Spleen (tissue), 13 donors: ENCODE measurements at regions of chr9 and their contacts with region 1.

Region 1: GRCh38 chr9:98034593-98035546 is 21.7 kb upstream of the NANS start:
- DNase-seq: peak; percentile 94
- H3K4me3 ChIP-seq: peak overlapping the region in 1 of 8 donors; percentile 44
- H3K27ac ChIP-seq: peak overlapping the region in 5 of 8 donors; percentile 3 to 73 (median 56)
- H3K4me1 ChIP-seq: peaks cover 7 to 56% (median 41%) of the 10 kb centered on the region in 6 donors
- H3K27me3 ChIP-seq: no peaks in the 10 kb centered on the region
- CTCF ChIP-seq: peak; percentile 61 to 94 (median 86)
- POLR2A ChIP-seq: no peak

Region 2: GRCh38 chr9:97921959-97922724 is 112.7 kb before region 1 on chr9 and contains the start of gene TRMO:
- intact Hi-C with region 1: loop called (anchors 5 kb)
- DNase-seq: peak; percentile 99
- H3K4me3 ChIP-seq: peak within 1 kb of the TSS; percentile 42 to 78 (median 56)
- H3K27ac ChIP-seq: peak within 1 kb of the TSS; percentile 96 to 100 (median 99)
- H3K4me1 ChIP-seq: peaks cover 32 to 72% (median 57%) of the 10 kb centered on the region in 6 donors
- H3K27me3 ChIP-seq: no peaks in the 10 kb centered on the region
- CTCF ChIP-seq: peak; percentile 42 to 82 (median 62)
- POLR2A ChIP-seq: peak; percentile 85 to 96 (median 89)
- total RNA-seq, gene TRMO: 16.8 to 58.6 (median 28.3) TPM

Region 3: DNA sequence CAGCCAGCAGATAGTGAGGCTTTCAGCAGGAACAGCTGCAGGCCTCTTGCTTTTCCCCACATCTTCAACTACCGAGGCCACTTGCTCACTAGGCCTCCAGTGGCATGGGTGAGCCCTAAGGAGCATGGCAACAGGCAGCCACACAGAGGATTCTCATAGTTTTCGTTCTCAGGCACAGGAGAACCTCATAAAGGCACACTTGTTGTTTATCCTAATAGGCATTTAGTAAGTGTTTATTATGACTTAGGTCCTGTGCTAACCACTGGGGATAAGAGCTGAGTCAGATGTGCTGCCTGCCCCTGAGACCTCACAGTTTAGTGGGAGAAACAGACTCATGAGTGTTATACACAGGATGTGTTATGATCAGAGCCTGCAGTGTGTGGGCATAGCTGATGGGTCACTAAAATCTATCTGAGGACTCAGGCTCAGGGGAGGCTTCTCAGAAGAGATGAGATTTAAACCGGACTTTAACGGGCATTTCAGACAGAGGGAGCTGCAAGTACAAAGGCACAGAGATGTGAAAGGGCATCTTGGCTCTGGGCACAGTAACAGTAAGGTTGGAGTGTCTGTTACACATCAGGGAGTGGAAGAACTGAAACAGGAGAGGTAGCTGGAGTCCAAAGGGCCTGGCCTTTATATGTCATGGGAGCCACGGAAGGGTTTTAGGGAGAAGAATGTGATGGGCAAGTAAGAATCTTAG is 75.9 kb before region 1 on chr9:
- intact Hi-C with region 1: no loop called
- DNase-seq: no peak
- H3K4me3 ChIP-seq: no peak overlapping the region
- H3K27ac ChIP-seq: no peak overlapping the region
- H3K4me1 ChIP-seq: no peaks in the 10 kb centered on the region
- H3K27me3 ChIP-seq: no peaks in the 10 kb centered on the region
- CTCF ChIP-seq: no peak
- POLR2A ChIP-seq: no peak

Region 4: DNA sequence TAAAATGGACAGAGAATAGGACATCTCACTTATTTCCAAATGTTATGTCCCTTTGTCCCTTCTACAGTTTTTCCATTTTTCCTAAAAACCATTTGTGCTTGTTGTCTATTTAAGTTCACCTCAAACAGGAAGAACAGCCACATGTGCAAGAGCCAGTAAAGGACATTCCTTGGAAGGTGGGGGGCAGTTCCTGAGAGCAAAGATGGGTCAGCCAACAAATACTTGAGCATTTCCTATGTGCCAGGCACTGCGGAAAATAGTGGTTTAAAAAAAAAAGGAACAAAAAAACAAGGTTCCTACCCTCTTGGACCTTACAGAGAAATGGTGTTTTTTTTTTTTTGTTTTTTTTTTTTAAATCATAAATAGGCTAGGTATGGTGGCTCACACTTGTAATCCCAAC is 24.9 kb before region 1 on chr9:
- intact Hi-C with region 1: loop called (anchors 5 kb)
- DNase-seq: no peak
- H3K4me3 ChIP-seq: no peak overlapping the region
- H3K27ac ChIP-seq: peak overlapping the region in 7 of 8 donors; percentile 4 to 59 (median 44)
- H3K4me1 ChIP-seq: peaks cover 10 to 34% (median 20%) of the 10 kb centered on the region in 6 donors
- H3K27me3 ChIP-seq: no peaks in the 10 kb centered on the region
- CTCF ChIP-seq: no peak
- POLR2A ChIP-seq: no peak